Ovary (tissue), 10 donors: ENCODE measurements at regions of chr11 and their contacts with region 1.

Region 1: DNA sequence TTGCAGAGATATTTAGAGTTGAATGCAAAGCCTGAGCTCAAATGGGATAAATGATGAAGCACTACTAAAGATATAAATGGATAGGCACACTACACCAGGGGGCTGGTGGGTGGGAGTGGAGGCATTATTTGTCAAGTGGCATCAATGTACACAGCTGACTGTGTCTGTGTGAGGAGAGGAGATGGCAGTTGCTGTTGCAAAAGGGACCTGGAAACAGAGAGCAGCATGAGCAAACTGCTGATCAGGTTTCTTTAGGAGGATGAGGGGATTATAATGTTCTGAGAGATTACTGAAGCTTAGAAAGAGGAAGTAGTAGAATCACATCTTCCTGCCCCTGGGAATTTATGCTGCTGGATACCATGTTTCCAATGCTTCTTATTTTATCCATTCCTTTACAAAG is 39.4 kb upstream of the LIN7C start:
- DNase-seq: no peak
- H3K4me3 ChIP-seq: no peak overlapping the region
- H3K27ac ChIP-seq: no peak overlapping the region
- H3K4me1 ChIP-seq: no peaks in the 10 kb centered on the region
- H3K27me3 ChIP-seq: no peaks in the 10 kb centered on the region
- CTCF ChIP-seq: no peak
- EP300 ChIP-seq: no peak
- POLR2A ChIP-seq: no peak

Region 2: GRCh38 chr11:26457636-26458035 is 1088.3 kb before region 1 on chr11:
- intact Hi-C with region 1: loop called in 1 of 4 experiments (anchors 5 kb)
- DNase-seq: no peak
- H3K4me3 ChIP-seq: no peak overlapping the region
- H3K27ac ChIP-seq: no peak overlapping the region
- H3K4me1 ChIP-seq: no peaks in the 10 kb centered on the region
- H3K27me3 ChIP-seq: no peaks in the 10 kb centered on the region
- CTCF ChIP-seq: no peak
- EP300 ChIP-seq: no peak
- POLR2A ChIP-seq: no peak

Region 3: GRCh38 chr11:27524155-27524554 is 21.8 kb before region 1 on chr11:
- intact Hi-C with region 1: no loop called
- DNase-seq: no peak
- H3K4me3 ChIP-seq: no peak overlapping the region
- H3K27ac ChIP-seq: no peak overlapping the region
- H3K4me1 ChIP-seq: no peaks in the 10 kb centered on the region
- H3K27me3 ChIP-seq: no peaks in the 10 kb centered on the region
- CTCF ChIP-seq: no peak
- EP300 ChIP-seq: no peak
- POLR2A ChIP-seq: no peak